ENCODE measurements at regions of chr5 and their contacts with region 1.

Region 1: DNA sequence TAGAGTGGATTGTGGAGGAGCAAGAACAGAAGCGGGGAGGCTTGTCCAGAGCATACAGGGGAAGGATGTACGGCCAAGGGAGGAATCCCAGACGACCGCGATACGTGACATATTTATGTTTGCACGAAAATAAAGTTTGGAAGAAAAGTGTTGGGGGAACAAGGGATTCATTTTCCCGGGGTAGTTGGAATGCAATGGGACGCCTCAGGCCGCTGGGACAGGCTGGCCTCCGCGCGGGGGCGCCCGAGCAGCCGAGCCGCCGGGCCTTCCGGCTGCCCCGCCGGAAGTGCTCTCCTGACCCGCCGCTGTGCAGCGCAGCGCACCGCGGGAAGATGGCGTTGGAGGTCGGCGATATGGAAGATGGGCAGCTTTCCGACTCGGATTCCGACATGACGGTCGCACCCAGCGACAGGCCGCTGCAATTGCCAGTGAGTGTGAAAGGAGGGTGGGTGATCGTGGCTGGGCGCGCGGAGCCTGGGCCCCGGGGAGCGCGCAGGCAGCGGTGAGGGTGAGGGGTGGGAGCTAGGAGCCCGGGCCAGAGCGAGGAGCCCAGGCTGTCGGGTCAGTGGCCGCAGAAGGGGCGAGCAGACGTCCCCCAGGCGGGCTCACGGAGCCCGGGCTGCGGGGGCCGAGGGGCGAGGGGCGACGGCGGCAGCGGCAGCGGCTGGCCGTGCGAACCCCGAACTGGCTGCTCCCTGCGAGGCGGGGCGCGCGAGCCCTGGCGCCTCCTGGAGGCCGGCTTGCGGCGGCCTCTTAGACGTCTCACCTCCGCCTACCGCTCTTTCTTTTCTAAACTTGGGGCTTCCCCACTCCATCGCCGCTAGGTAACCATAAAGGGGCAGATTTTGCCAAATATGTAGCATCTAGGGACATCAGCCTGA is at the start of gene PHAX:
- DNase-seq: peak; percentile 57 to 90 (median 72)
- H3K4me3 ChIP-seq: peak within 1 kb of the TSS; percentile 67 to 100 (median 95)
- H3K27ac ChIP-seq: peak within 1 kb of the TSS in 58 of 59 donors; percentile 21 to 95 (median 83)
- H3K27me3 ChIP-seq: no peaks in the 10 kb centered on the region
- CTCF ChIP-seq: peak; percentile 57 to 91 (median 81)
- total RNA-seq, gene PHAX: 32.7 to 78.0 (median 53.0) TPM

Region 2: DNA sequence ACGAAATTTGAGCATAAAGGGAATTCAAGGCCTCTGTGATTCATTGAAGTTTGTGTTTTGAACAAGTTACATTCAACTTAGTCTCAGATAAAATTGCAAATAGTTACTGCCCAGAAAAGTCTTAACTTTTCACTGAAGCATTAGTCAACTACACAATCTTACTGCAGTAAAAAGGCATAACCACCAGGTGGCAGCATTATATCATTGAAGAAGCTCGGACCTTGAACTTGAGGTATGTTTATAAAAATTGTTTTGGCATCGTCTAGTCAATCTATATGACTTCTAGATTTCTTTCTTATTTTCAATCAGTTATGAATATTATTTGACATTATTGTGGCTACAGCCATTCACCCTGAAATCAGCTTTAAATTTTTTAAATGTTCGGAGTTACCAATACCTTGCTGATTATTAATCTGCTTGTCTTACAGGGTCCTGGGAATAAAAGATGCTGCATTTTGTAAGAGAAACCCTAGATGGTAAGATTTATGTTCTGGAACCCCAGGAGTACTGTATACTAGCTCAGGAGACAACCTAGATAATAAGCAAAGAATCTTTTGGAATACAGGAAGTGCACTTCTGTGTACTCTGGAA is 261.6 kb before region 1 on chr5:
- intact Hi-C with region 1: loop called (anchors 2 to 5 kb)
- DNase-seq: peak in 3 of 10 donors; percentile 22 to 55 (median 52)
- H3K4me3 ChIP-seq: no peak overlapping the region
- H3K27ac ChIP-seq: no peak overlapping the region
- H3K27me3 ChIP-seq: peaks cover 0 to 4% (median 0%) of the 10 kb centered on the region in 45 donors
- CTCF ChIP-seq: peak; percentile 77 to 99 (median 93)

Region 3: GRCh38 chr5:126544087-126544740 is 56.7 kb before region 1 on chr5:
- intact Hi-C with region 1: loop called (anchors 5 kb)
- DNase-seq: peak in 4 of 10 donors; percentile 44 to 54 (median 48)
- H3K4me3 ChIP-seq: no peak overlapping the region
- H3K27ac ChIP-seq: no peak overlapping the region
- H3K27me3 ChIP-seq: no peaks in the 10 kb centered on the region
- CTCF ChIP-seq: peak in 52 of 56 donors; percentile 9 to 63 (median 47)

Region 4: GRCh38 chr5:126615286-126615685 is 14.4 kb after region 1 on chr5:
- intact Hi-C with region 1: no loop called
- DNase-seq: no peak
- H3K4me3 ChIP-seq: no peak overlapping the region
- H3K27ac ChIP-seq: no peak overlapping the region
- H3K27me3 ChIP-seq: no peaks in the 10 kb centered on the region
- CTCF ChIP-seq: no peak